Heart right ventricle (tissue), 16 donors: ENCODE measurements at regions of chr22 and their contacts with region 1.

Region 1: GRCh38 chr22:36194971-36195370 is 6.6 kb downstream of the APOL4 start:
- DNase-seq: peak; percentile 40 to 75
- ATAC-seq: peak; percentile 39 to 65 (median 59)
- H3K4me3 ChIP-seq: no peak overlapping the region
- H3K27ac ChIP-seq: peak overlapping the region in 1 of 10 donors; percentile 19
- H3K4me1 ChIP-seq: peaks cover 3 to 75% (median 53%) of the 10 kb centered on the region in 9 donors
- H3K27me3 ChIP-seq: no peaks in the 10 kb centered on the region
- CTCF ChIP-seq: peak; percentile 50 to 88 (median 82)

Region 2: DNA sequence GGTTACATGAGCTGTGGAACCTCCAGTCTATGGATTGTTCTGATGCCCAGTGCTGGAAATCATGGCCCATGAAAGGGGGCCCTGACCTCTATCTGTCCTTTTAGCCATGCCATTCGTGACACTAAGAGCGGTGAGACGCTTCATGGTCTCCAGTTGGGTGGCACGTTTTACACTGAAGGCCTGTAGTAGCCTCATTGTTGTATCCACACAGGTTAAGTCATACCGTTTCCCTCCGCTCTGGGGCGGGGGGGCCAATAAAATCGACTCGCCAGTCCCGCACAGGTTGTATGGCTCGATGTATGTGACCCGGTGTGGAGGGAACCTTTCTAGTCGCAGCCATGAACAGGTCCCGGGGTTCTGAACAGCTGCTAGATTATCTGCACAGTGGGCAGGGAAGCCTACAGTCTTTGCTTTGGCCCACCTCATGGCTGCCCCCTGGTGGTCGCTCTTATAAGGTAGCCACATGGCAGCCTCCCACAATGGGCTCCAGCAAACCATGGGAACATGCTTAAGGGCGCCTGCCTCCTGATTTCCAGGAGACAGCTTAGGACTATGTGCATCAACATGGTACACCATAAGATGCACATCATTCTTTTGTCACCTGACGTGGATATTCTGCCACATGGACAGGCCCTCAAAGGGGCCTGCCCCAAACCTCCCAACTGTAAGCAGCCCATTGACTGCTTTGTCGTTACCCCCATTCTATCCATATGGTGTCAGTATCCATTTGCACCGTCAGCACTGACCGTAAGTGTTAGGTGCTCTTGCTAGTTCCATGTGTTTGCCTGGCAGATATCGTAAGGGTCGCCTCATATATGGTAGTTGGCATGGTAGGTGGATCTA is 14.7 kb before region 1 on chr22:
- intact Hi-C with region 1: no loop called
- DNase-seq: peak; percentile 87 to 89
- ATAC-seq: peak; percentile 87 to 96 (median 94)
- H3K4me3 ChIP-seq: no peak overlapping the region
- H3K27ac ChIP-seq: no peak overlapping the region
- H3K4me1 ChIP-seq: peaks cover 0 to 22% (median 8%) of the 10 kb centered on the region in 9 donors
- H3K27me3 ChIP-seq: no peaks in the 10 kb centered on the region
- CTCF ChIP-seq: peak; percentile 80 to 96 (median 91)

Region 3: GRCh38 chr22:36208177-36208755 is 13.3 kb after region 1 on chr22:
- intact Hi-C with region 1: no loop called
- DNase-seq: no peak
- ATAC-seq: no peak
- H3K4me3 ChIP-seq: no peak overlapping the region
- H3K27ac ChIP-seq: peak overlapping the region in 1 of 10 donors; percentile 4
- H3K4me1 ChIP-seq: peaks cover 0 to 54% (median 12%) of the 10 kb centered on the region in 9 donors
- H3K27me3 ChIP-seq: no peaks in the 10 kb centered on the region
- CTCF ChIP-seq: no peak

Region 4: GRCh38 chr22:36221799-36222751 is 27.1 kb after region 1 on chr22:
- intact Hi-C with region 1: loop called in 2 of 10 experiments (anchors 1 to 2 kb)
- DNase-seq: peak in 1 of 2 donors; percentile 51
- ATAC-seq: peak in 7 of 8 donors; percentile 48 to 85 (median 75)
- H3K4me3 ChIP-seq: no peak overlapping the region
- H3K27ac ChIP-seq: peak overlapping the region in 1 of 10 donors; percentile 11
- H3K4me1 ChIP-seq: peaks cover 0 to 27% (median 20%) of the 10 kb centered on the region in 9 donors
- H3K27me3 ChIP-seq: no peaks in the 10 kb centered on the region
- CTCF ChIP-seq: peak; percentile 31 to 83 (median 67)

Region 5: DNA sequence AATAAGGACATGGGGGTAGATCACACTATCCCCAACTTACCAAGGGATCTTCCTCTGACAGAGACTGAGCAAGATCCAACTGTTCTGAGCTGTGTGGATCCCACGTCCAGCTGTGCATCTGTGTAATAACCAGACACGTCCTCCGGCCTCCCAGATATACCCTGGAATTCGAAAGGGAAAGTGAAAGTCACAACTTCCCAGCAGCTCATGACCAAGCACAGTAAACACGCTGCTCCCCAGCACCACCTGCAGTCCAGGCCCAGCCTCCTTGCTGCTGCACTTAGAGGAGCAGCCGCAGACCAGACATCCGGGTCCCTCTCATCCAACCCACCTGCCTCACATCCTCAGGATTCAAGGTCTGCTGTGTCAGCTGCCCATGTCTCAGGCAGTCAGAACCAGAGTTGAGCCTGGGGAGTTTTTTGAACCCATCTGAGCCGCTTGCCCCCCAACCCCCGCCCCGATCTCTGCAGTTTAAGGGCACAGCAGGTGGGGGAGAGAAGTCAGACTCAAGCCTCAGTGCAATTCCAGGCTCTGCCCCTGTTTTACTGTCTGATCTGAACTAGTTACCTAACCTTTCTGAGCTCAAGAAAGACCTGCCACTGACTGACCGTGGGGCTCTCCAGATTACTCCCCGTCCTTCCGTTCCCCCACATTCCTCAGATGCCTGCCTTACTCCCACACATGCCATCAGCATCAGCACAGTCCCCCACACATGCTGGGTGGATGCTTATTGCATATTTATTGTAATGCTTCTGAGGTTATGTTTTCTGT is 44.6 kb after region 1 on chr22 and contains the start of gene APOL2:
- intact Hi-C with region 1: loop called in 7 of 10 experiments (anchors 5 kb)
- DNase-seq: peak; percentile 86 to 93
- ATAC-seq: peak; percentile 94 to 98 (median 97)
- H3K4me3 ChIP-seq: peak within 1 kb of the TSS; percentile 59 to 83 (median 66)
- H3K27ac ChIP-seq: peak within 1 kb of the TSS; percentile 83 to 97 (median 92)
- H3K4me1 ChIP-seq: peaks cover 28 to 62% (median 55%) of the 10 kb centered on the region in 9 donors
- H3K27me3 ChIP-seq: no peaks in the 10 kb centered on the region
- CTCF ChIP-seq: peak; percentile 37 to 91 (median 71)
- total RNA-seq, gene APOL2: 30.9 to 215 (median 53.3) TPM

Region 6: GRCh38 chr22:36258701-36259614 is 64.0 kb after region 1 on chr22:
- intact Hi-C with region 1: loop called in 2 of 10 experiments (anchors 5 to 10 kb)
- DNase-seq: peak in 1 of 2 donors; percentile 46
- ATAC-seq: peak in 7 of 8 donors; percentile 32 to 70 (median 47)
- H3K4me3 ChIP-seq: no peak overlapping the region
- H3K27ac ChIP-seq: peak overlapping the region in 9 of 10 donors; percentile 64 to 86 (median 69)
- H3K4me1 ChIP-seq: peaks cover 13 to 66% (median 49%) of the 10 kb centered on the region in 9 donors
- H3K27me3 ChIP-seq: no peaks in the 10 kb centered on the region
- CTCF ChIP-seq: no peak

Region 7: GRCh38 chr22:36277482-36278291 is 82.7 kb after region 1 on chr22:
- intact Hi-C with region 1: loop called in 9 of 10 experiments (anchors 1 to 10 kb)
- DNase-seq: peak; percentile 57 to 65
- ATAC-seq: peak; percentile 53 to 73 (median 68)
- H3K4me3 ChIP-seq: peak overlapping the region in 1 of 10 donors; percentile 12
- H3K27ac ChIP-seq: peak overlapping the region in 3 of 10 donors; percentile 2 to 31 (median 21)
- H3K4me1 ChIP-seq: peaks cover 3 to 19% (median 11%) of the 10 kb centered on the region in 9 donors
- H3K27me3 ChIP-seq: no peaks in the 10 kb centered on the region
- CTCF ChIP-seq: peak; percentile 59 to 89 (median 82)

Region 8: DNA sequence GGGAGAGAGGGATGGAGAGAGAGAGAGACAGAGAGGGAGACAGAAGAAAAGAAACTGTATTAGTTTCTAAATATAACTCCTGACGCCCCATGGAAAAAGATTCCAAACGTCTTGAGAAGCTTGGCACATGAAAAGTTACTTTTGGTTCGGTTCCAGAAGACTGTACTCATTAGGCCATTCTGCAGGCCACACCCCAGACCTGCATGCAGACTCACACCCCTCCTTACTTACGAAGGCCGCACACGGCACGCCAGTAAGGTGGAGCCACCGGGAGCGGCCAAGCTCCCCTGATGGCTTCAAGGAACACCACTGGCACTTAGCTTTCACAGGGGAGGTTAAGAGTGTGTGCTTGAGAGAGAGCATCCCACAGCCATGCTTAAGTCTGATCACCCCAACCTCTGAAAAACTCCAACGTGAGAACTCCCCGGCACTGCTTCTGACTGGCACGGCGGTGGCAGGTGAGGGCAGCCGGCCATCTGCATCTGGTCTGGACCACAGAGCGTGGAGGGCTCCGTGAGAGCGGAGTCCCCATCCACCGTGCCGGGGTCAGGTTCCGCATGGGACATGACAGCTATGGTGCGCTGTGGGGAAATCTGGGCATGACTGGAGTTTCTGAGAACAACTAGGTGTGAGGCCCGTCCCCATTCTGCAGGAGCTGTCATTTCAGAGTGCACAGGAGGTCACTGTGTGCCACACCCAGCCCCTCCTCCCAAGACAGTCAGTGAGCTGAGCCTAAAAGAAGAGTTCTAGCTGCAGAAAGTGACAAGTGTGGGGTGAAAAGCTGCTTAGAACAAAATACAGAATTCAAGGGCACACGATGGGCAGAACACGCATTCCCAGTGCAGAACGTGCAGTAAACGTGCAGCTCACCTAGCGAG is 130.4 kb after region 1 on chr22:
- intact Hi-C with region 1: no loop called
- DNase-seq: peak in 1 of 2 donors; percentile 71
- ATAC-seq: peak in 6 of 8 donors; percentile 7 to 12 (median 10)
- H3K4me3 ChIP-seq: no peak overlapping the region
- H3K27ac ChIP-seq: peak overlapping the region; percentile 84 to 98 (median 96)
- H3K4me1 ChIP-seq: peaks cover 76 to 99% (median 94%) of the 10 kb centered on the region in 9 donors
- H3K27me3 ChIP-seq: no peaks in the 10 kb centered on the region
- CTCF ChIP-seq: no peak

Region 9: DNA sequence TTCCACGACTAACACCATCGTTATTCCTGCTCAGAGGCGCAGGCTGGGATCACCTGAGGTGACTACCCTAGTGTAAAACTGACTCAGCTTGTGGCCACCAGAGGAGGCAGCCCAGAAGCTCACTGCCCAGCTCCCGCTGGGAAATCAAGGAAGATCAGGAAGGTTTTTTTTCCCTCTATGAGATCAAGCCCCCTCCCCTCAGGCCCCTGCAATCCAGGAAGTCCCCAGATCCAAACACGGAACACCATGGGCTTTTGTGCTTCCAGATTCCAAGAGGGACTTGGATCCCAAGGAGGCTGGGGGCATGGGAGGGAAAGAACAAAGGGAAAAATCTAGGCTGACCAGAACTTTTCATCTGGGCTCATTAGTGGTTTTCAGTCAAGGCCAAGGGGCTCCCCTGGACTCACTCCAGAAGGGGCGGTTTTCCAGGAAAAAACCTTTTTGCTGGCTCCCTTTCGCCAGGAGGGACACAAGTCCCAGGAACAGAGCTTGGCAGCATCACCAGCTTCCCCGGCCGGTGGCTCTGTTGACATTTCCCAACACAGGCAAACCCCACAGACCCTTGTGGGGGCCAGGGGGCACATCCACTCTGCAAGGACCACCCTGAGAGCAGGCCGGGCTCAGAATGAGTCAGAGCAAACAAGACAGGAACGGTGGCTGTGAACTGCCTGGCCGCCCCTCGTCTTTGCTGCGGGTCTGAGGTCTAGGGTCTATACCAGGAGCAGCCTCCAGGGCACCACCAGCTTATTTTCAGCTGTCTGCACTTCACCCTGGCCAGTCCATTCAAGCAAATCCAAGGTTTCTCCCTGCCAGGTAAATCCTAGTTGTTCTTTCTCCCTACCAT is 156.0 kb after region 1 on chr22:
- intact Hi-C with region 1: no loop called
- DNase-seq: peak in 1 of 2 donors; percentile 25
- ATAC-seq: peak in 4 of 8 donors; percentile 16 to 20 (median 18)
- H3K4me3 ChIP-seq: peak overlapping the region in 1 of 10 donors; percentile 4
- H3K27ac ChIP-seq: peak overlapping the region; percentile 52 to 93 (median 88)
- H3K4me1 ChIP-seq: peaks cover 49 to 98% (median 96%) of the 10 kb centered on the region in 9 donors
- H3K27me3 ChIP-seq: no peaks in the 10 kb centered on the region
- CTCF ChIP-seq: peak in 3 of 9 donors; percentile 5 to 27 (median 13)

Region 10: GRCh38 chr22:36470162-36470993 is 275.4 kb after region 1 on chr22:
- intact Hi-C with region 1: loop called in 2 of 10 experiments (anchors 10 kb)
- DNase-seq: peak; percentile 74 to 87
- ATAC-seq: peak; percentile 61 to 79 (median 74)
- H3K4me3 ChIP-seq: no peak overlapping the region
- H3K27ac ChIP-seq: peak overlapping the region in 9 of 10 donors; percentile 66 to 97 (median 94)
- H3K4me1 ChIP-seq: peaks cover 15 to 79% (median 54%) of the 10 kb centered on the region in 9 donors
- H3K27me3 ChIP-seq: no peaks in the 10 kb centered on the region
- CTCF ChIP-seq: peak in 8 of 9 donors; percentile 92 to 98 (median 97)

Region 11: DNA sequence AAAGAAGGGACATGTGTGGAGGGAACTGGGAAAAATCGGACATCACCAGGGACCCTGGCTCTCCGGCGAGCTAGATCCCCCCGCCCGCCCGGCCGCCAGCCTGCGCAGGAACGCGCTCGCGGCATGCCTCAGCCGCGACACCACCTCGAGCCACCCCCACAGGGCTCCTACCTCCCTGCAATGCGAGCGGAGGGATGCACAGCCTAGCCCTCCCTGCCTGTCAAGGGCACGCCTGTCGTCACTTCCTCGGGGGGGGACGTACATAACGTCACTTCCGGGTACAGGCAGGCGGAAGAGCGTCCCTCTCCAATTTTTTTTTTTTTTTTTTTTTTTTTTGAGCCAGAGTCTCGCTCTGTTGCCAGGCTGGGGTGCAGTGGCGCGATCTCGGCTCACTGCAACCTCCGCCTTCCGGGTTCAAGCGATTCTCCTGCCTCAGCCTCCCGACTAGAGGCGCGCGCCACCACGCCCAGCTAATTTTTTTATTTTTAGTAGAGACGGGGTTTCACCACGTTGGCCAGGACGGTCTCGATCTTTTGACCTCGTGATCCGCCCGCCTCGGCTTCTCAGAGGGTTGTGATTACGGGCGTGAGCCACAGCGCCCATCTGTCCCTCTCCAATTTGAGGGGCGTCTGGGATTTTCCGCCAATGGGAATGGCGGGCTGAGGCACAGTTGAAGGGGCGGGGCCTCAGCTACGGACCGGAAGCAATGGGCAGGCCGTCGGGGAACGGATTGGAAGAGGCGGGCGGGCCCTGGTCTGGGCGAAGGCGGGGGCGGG is 286.6 kb after region 1 on chr22 and contains the start of gene TXN2:
- intact Hi-C with region 1: loop called in 5 of 10 experiments (anchors 10 kb)
- DNase-seq: peak; percentile 97 to 98
- ATAC-seq: peak; percentile 94 to 97 (median 96)
- H3K4me3 ChIP-seq: peak within 1 kb of the TSS; percentile 55 to 94 (median 74)
- H3K27ac ChIP-seq: peak within 1 kb of the TSS; percentile 96 to 100 (median 99)
- H3K4me1 ChIP-seq: peaks cover 0 to 24% (median 20%) of the 10 kb centered on the region in 9 donors
- H3K27me3 ChIP-seq: no peaks in the 10 kb centered on the region
- CTCF ChIP-seq: no peak
- total RNA-seq, gene TXN2: 107 to 142 (median 122) TPM